Transverse colon (tissue), 4 donors: ENCODE measurements at regions of chr4 and their contacts with region 1.

Region 1: DNA sequence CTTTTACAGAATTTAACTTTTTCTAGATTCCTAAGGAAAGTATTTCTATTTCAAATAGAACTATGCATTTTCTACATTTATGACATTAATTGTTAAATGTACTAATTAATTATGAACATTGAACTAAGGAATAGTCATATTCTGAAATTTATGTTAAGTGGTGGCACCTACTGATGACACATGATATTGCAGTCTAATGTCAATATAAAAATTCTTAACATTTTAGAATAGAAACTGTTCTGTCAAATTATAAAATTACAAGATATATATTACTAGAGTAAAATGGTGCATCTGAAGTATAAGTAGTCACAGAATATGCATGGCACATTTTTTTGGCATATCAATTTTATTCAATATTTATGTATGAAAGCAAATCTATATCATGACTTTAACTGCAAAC is 40.2 kb upstream of the NDNF start:
- DNase-seq: no peak
- H3K4me3 ChIP-seq: no peak overlapping the region
- H3K27ac ChIP-seq: no peak overlapping the region
- H3K4me1 ChIP-seq: no peaks in the 10 kb centered on the region
- H3K27me3 ChIP-seq: no peaks in the 10 kb centered on the region
- CTCF ChIP-seq: peak; percentile 34 to 46 (median 40)
- EP300 ChIP-seq: no peak
- POLR2A ChIP-seq: no peak

Region 2: DNA sequence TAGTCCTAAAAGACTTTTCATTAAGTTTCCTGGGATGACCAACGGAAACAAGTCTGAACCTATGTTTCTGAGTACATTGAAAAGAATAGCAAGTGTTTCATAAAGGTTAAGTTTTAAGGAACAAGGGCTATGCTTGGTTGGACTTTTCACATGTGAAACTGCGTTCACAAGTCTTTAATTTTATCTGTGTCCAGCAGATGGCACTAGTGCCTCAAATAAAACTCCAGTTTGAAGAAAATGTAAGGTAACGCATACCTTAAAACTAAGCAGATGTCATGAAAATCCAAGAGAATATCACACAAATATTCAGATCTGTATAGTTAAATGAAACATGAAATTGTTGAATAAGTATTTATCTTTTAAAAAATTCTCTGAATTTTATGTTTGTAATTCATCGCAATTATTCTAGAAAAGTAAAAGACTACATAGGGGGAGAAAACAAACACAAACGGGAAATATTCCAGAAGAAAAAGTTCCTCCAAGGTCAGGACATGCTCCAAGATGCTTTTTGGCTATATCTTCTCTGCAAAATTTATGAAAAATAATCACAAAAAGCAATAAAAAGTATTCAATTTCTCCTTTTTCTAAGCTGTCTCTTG is 956.3 kb before region 1 on chr4:
- in situ Hi-C with region 1: loop called in 3 of 4 experiments (anchors 10 to 25 kb)
- intact Hi-C with region 1: no loop called
- DNase-seq: no peak
- H3K4me3 ChIP-seq: no peak overlapping the region
- H3K27ac ChIP-seq: no peak overlapping the region
- H3K4me1 ChIP-seq: peaks cover 0 to 6% (median 0%) of the 10 kb centered on the region in 4 donors
- H3K27me3 ChIP-seq: no peaks in the 10 kb centered on the region
- CTCF ChIP-seq: peak; percentile 60 to 71 (median 63)
- EP300 ChIP-seq: no peak
- POLR2A ChIP-seq: no peak

Region 3: GRCh38 chr4:120163895-120164294 is 948.6 kb before region 1 on chr4:
- in situ Hi-C with region 1: loop called in 3 of 4 experiments (anchors 10 to 25 kb)
- intact Hi-C with region 1: no loop called
- DNase-seq: no peak
- H3K4me3 ChIP-seq: no peak overlapping the region
- H3K27ac ChIP-seq: no peak overlapping the region
- H3K4me1 ChIP-seq: no peaks in the 10 kb centered on the region
- H3K27me3 ChIP-seq: no peaks in the 10 kb centered on the region
- CTCF ChIP-seq: no peak
- EP300 ChIP-seq: no peak
- POLR2A ChIP-seq: no peak

Region 4: DNA sequence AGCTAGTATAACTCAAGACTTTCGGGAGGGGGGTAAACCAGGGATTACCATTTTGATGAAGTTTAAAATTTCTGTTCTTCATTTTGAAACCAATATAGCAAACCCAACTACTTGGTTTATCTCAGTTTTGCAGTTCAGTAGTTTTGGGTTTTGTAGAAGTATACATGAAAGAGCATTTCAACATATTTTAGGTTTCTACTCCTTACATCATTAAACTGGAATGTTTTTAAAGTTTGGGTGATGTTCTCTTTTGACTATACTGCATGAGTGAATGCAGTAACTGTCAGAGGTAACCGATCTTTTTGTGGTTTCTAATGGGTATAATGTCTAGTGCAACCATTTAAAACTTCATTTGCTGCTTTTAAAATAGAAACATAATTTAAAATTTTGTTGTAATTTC is 797.6 kb before region 1 on chr4:
- in situ Hi-C with region 1: no loop called
- intact Hi-C with region 1: loop called (anchors 5 kb)
- DNase-seq: no peak
- H3K4me3 ChIP-seq: no peak overlapping the region
- H3K27ac ChIP-seq: no peak overlapping the region
- H3K4me1 ChIP-seq: no peaks in the 10 kb centered on the region
- H3K27me3 ChIP-seq: no peaks in the 10 kb centered on the region
- CTCF ChIP-seq: no peak
- EP300 ChIP-seq: no peak
- POLR2A ChIP-seq: no peak

Region 5: GRCh38 chr4:120801137-120801758 is 311.3 kb before region 1 on chr4:
- in situ Hi-C with region 1: no loop called
- intact Hi-C with region 1: no loop called
- DNase-seq: no peak
- H3K4me3 ChIP-seq: no peak overlapping the region
- H3K27ac ChIP-seq: peak overlapping the region in 1 of 4 donors; percentile 7
- H3K4me1 ChIP-seq: no peaks in the 10 kb centered on the region
- H3K27me3 ChIP-seq: no peaks in the 10 kb centered on the region
- CTCF ChIP-seq: no peak
- EP300 ChIP-seq: no peak
- POLR2A ChIP-seq: no peak

Region 6: DNA sequence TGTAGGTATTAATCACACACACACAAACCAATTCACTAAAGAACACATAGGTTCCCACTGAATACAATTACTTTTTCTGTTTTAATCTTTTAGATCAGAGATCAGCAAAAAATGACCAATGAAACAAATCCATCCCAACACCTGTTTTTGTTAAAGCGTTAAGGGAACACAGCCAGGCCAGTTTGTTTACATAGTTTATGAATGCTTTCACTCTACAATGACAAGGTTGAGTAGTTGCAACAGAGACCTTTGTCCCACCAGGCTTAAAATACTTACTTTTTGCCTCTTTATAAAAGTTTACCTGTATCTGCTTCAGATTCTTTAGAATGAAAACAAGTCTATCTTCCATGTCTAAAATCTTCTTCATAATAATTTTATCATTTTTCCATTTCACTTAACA is 388.3 kb after region 1 on chr4:
- in situ Hi-C with region 1: no loop called
- intact Hi-C with region 1: no loop called
- DNase-seq: no peak
- H3K4me3 ChIP-seq: no peak overlapping the region
- H3K27ac ChIP-seq: no peak overlapping the region
- H3K4me1 ChIP-seq: no peaks in the 10 kb centered on the region
- H3K27me3 ChIP-seq: no peaks in the 10 kb centered on the region
- CTCF ChIP-seq: no peak
- EP300 ChIP-seq: no peak
- POLR2A ChIP-seq: no peak